Sciatic nerve (tissue), 2 donors: ENCODE measurements at regions of chr11 and their contacts with region 1.

Region 1: GRCh38 chr11:18802381-18803257 is 11.0 kb upstream of the PTPN5 start:
- DNase-seq: peak; percentile 68
- ATAC-seq: peak; percentile 64

Region 2: DNA sequence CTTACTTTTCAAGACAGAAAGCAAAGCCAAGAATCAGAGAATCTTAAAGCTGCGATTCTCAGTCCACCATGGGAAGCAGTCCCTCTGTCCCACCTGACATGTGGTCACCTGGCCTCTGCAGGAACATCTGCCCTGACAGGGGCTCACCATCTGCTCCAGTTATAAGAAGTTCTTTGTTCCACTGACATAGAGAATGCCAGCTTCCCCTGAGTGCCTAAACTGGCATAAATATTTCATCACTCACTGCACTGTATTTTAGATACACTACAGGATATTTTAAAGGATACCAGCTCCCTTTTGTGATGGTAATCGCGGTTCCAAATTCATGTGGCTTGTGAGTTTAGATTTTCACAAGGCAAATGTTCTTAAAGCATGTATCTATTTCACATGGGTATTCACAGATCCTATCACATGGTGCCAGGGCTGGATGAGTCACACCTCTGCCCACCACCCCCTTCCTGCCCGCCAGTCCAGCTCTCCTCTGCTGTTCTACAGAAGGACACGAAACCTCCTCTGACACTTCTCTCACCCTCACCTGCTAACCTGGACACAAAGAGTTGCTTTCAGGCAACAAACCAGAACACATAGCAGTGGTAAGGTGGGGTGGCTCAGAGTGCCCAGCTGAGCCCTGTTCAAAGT is 962.5 kb before region 1 on chr11:
- intact Hi-C with region 1: loop called (anchors 5 kb)
- DNase-seq: no peak
- ATAC-seq: no peak

Region 3: GRCh38 chr11:18865951-18866350 is 63.3 kb after region 1 on chr11:
- intact Hi-C with region 1: no loop called
- DNase-seq: no peak
- ATAC-seq: no peak